HEK293 (cell line): ENCODE measurements at regions of chr9 and their contacts with region 1.

Region 1: GRCh38 chr9:130088051-130088450 is 34.3 kb downstream of the GPR107 start:
- H3K4me3 ChIP-seq: no peak overlapping the region
- H3K27ac ChIP-seq: no peak overlapping the region
- H3K4me1 ChIP-seq: no peaks in the 10 kb centered on the region
- CTCF ChIP-seq: no peak

Region 2: GRCh38 chr9:130073373-130073772 is 14.7 kb before region 1 on chr9:
- CTCF ChIA-PET with region 1: no interaction called
- POLR2A ChIA-PET with region 1: no interaction called
- H3K4me3 ChIP-seq: no peak overlapping the region
- H3K27ac ChIP-seq: no peak overlapping the region
- H3K4me1 ChIP-seq: peaks cover 5% of the 10 kb centered on the region; the same call in 1 of the 2 replicates
- CTCF ChIP-seq: no peak

Region 3: GRCh38 chr9:130118841-130119518 is 30.9 kb after region 1 on chr9:
- CTCF ChIA-PET with region 1: interaction called, 3 read pairs
- POLR2A ChIA-PET with region 1: interaction called, 12 read pairs
- H3K4me3 ChIP-seq: no peak overlapping the region
- H3K27ac ChIP-seq: 0 out of 2 replicates have a peak overlapping the region, but pooled peaks have one; percentile 41
- H3K4me1 ChIP-seq: peaks cover 8% of the 10 kb centered on the region; the same call in 1 of the 2 replicates
- CTCF ChIP-seq: no peak

Region 4: DNA sequence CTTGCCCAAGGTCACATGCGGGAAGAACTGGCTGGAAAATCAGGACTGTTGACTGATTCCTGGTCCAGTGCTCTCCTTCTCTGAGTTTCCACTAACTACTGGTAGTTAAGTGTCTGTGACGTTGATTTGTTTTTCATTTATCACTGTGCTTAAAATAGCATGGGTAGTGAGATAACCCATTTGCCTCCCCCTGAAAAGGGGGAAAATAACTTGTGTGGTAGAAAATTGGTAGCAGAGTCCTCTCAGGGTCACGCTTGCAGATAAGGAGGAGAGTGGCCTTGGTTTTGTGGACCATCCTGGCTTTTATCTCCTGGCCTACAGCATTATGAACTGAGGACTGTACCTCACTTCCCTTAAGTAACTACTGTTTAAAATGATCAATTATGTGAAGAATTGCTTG is 502.3 kb after region 1 on chr9:
- CTCF ChIA-PET with region 1: no interaction called
- POLR2A ChIA-PET with region 1: no interaction called
- H3K4me3 ChIP-seq: no peak overlapping the region
- H3K27ac ChIP-seq: no peak overlapping the region
- H3K4me1 ChIP-seq: no peaks in the 10 kb centered on the region
- CTCF ChIP-seq: no peak